ENCODE measurements at regions of chr3 and their contacts with region 1.

Region 1: GRCh38 chr3:97871801-97872524 is 50.2 kb downstream of the CRYBG3 start:
- DNase-seq: peak; percentile 83
- H3K4me3 Mint-ChIP-seq: peak overlapping the region; percentile 60
- H3K27ac Mint-ChIP-seq: peak overlapping the region; percentile 92
- H3K4me1 Mint-ChIP-seq: peaks cover 32% of the 10 kb centered on the region
- H3K27me3 Mint-ChIP-seq: no peaks in the 10 kb centered on the region
- CTCF ChIP-seq: no peak

Region 2: GRCh38 chr3:97029972-97030371 is 842.0 kb before region 1 on chr3:
- CTCF ChIA-PET with region 1: no interaction called
- POLR2A ChIA-PET with region 1: no interaction called
- intact Hi-C with region 1: no loop called
- DNase-seq: no peak
- H3K4me3 Mint-ChIP-seq: no peak overlapping the region
- H3K27ac Mint-ChIP-seq: no peak overlapping the region
- H3K4me1 Mint-ChIP-seq: no peaks in the 10 kb centered on the region
- H3K27me3 Mint-ChIP-seq: no peaks in the 10 kb centered on the region
- CTCF ChIP-seq: no peak

Region 3: GRCh38 chr3:97882975-97883598 is 11.1 kb after region 1 on chr3:
- CTCF ChIA-PET with region 1: interaction called, 4 read pairs
- POLR2A ChIA-PET with region 1: interaction called, 28 read pairs
- intact Hi-C with region 1: no loop called
- DNase-seq: peak; percentile 80
- H3K4me3 Mint-ChIP-seq: peak overlapping the region; percentile 5
- H3K27ac Mint-ChIP-seq: peak overlapping the region; percentile 5
- H3K4me1 Mint-ChIP-seq: peaks cover 20% of the 10 kb centered on the region
- H3K27me3 Mint-ChIP-seq: no peaks in the 10 kb centered on the region
- CTCF ChIP-seq: no peak

Region 4: DNA sequence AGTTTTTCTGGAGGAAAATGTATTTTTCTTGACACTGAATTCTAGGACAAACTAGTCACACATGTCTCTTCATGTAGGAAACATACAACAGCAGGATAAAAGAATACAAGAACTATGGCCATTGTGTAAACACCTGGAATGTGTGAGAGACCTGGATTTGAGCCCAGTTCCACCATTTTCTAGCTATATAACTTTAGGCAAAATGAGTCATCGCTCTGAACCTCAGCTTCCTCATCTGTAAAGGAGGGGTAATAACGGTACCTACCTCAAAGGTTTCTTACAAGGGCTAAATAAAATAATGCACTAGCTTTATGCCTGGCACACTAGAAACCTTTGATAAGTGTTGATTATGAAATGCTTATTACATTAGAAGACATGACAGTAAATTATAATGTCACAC is 42.4 kb after region 1 on chr3:
- CTCF ChIA-PET with region 1: interaction called, 3 read pairs
- POLR2A ChIA-PET with region 1: interaction called, 12 read pairs
- intact Hi-C with region 1: no loop called
- DNase-seq: peak; percentile 94
- H3K4me3 Mint-ChIP-seq: no peak overlapping the region
- H3K27ac Mint-ChIP-seq: peak overlapping the region; percentile 39
- H3K4me1 Mint-ChIP-seq: peaks cover 20% of the 10 kb centered on the region
- H3K27me3 Mint-ChIP-seq: no peaks in the 10 kb centered on the region
- CTCF ChIP-seq: no peak